HCT116 (cell line): ENCODE measurements at regions of chr13 and their contacts with region 1.

Region 1: GRCh38 chr13:37109051-37109678 is 3.7 kb upstream of the CSNK1A1L start:
- DNase-seq: no peak
- ATAC-seq: no peak
- H3K4me3 ChIP-seq: no peak overlapping the region
- H3K27ac ChIP-seq: no peak overlapping the region
- H3K4me1 ChIP-seq: no peaks in the 10 kb centered on the region
- H3K27me3 ChIP-seq: no peaks in the 10 kb centered on the region
- CTCF ChIP-seq: peak; percentile 7 to 65 (median 44); a peak in 5 of 6 replicates
- POLR2A ChIP-seq: no peak
- RAD21 ChIP-seq: peak; percentile 49

Region 2: GRCh38 chr13:38582133-38582532 is 1473.0 kb after region 1 on chr13:
- CTCF ChIA-PET with region 1: interaction called, 3 read pairs
- POLR2A ChIA-PET with region 1: no interaction called
- RAD21 ChIA-PET with region 1: no interaction called
- intact Hi-C with region 1: loop called (anchors 10 kb)
- DNase-seq: no peak
- ATAC-seq: peak; percentile 44; the same call in 1 of the 2 replicates
- H3K4me3 ChIP-seq: no peak overlapping the region
- H3K27ac ChIP-seq: no peak overlapping the region
- H3K4me1 ChIP-seq: no peaks in the 10 kb centered on the region
- H3K27me3 ChIP-seq: no peaks in the 10 kb centered on the region
- CTCF ChIP-seq: peak in 2 of 3 experiments; percentile 25 to 37; a peak in 3 of 6 replicates
- POLR2A ChIP-seq: no peak
- RAD21 ChIP-seq: peak; percentile 27; the same call in 1 of the 2 replicates

Region 3: DNA sequence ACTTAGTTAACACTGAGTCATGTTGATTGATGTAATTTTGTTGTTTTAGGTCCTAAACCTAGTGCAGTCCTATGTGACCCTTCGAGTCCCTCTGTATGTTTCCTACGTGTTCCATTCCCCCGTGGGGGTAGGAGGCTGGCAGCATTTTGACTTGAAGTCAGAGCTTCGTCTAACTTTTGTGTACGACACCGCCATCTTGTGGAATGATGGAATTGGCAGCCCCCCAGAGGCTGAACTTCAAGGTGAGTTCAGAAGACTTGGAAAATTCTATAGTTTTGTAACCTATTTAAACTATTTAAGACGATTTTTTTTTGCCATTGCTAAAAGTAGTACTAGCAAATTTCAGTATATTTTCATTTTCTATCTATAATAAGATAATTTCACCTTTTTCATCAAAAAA is 1763.5 kb after region 1 on chr13:
- CTCF ChIA-PET with region 1: no interaction called
- POLR2A ChIA-PET with region 1: no interaction called
- RAD21 ChIA-PET with region 1: no interaction called
- intact Hi-C with region 1: loop called (anchors 1 kb)
- DNase-seq: peak; percentile 42
- ATAC-seq: peak; percentile 65
- H3K4me3 ChIP-seq: no peak overlapping the region
- H3K27ac ChIP-seq: no peak overlapping the region
- H3K4me1 ChIP-seq: no peaks in the 10 kb centered on the region
- H3K27me3 ChIP-seq: no peaks in the 10 kb centered on the region; the same call in none of the 2 replicates
- CTCF ChIP-seq: peak; percentile 38 to 66 (median 63); a peak in 5 of 6 replicates
- POLR2A ChIP-seq: no peak
- RAD21 ChIP-seq: peak; percentile 37

Region 4: DNA sequence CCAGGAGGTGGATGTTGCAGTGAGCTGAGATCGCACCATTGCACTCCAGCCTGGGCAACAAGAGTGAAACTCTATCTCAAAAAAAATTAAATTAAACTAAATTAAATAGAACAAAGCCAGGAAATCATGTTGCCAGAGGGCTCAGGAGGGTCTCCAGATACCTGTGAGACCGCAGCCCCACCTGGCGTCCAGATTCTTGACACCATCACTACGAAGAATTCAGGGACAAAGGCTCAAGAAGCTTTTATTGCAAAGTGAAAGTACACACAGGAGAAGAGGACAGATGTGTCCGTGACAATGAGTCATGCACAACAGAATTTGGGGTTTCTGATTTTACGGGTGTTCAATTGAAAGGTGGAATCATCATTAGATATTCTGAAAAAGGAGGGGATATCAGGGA is 1804.9 kb after region 1 on chr13:
- CTCF ChIA-PET with region 1: no interaction called
- POLR2A ChIA-PET with region 1: no interaction called
- RAD21 ChIA-PET with region 1: no interaction called
- intact Hi-C with region 1: loop called (anchors 2 kb)
- DNase-seq: no peak
- ATAC-seq: no peak
- H3K4me3 ChIP-seq: no peak overlapping the region
- H3K27ac ChIP-seq: no peak overlapping the region
- H3K4me1 ChIP-seq: no peaks in the 10 kb centered on the region
- H3K27me3 ChIP-seq: peaks cover 8% of the 10 kb centered on the region; the same call in 1 of the 2 replicates
- CTCF ChIP-seq: no peak
- POLR2A ChIP-seq: no peak
- RAD21 ChIP-seq: no peak